ENCODE measurements at regions of chr3 and their contacts with region 1.

Region 1: DNA sequence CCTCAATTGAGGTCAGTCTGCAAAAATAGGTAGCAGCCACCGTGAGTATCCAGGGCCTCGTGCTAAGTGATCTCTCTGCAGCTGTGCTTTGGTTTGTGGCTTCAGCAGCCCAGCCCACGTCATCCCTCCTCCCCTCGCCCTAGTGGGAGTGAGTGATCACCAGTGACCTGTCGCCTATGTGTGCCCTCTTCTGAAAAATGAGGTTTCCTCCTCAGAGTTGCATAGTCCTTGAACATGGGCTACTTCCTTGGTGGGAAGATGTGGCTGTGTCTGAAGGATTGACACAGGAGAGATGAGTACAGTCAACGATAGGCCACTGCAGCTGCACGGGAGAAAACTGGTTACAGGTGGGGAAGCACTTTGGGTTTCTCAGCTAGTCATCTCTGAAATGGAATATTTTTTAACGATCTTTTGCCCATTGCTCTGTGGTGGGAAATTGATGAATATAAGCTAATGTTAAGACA is 144.8 kb upstream of the BHLHE40 start:
- DNase-seq: peak; percentile 80
- H3K4me3 Mint-ChIP-seq: peak overlapping the region; percentile 79
- H3K27ac Mint-ChIP-seq: peak overlapping the region; percentile 98
- H3K4me1 Mint-ChIP-seq: peaks cover 86% of the 10 kb centered on the region
- H3K27me3 Mint-ChIP-seq: no peaks in the 10 kb centered on the region

Region 2: DNA sequence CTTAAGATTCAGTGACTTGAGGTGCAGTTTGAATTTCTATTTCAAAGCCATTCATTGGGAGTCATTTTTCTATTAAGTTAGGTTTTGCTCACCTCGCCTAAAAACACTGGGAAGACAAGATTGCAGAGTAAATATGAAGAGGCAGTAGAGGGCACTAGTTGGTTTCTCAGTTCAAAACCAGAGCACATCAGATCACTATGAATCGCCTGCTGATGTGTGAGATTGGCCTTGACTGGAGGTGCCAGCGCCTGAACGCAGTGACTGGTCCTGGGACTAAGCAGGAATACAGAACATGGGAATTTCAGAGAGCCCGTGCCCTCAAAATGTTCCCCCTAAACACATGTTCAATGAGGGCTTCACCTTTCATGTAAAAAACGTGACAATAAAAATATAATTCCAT is 112.3 kb before region 1 on chr3:
- intact Hi-C with region 1: loop called (anchors 2 kb)
- DNase-seq: no peak
- H3K4me3 Mint-ChIP-seq: no peak overlapping the region
- H3K27ac Mint-ChIP-seq: peak overlapping the region; percentile 90
- H3K4me1 Mint-ChIP-seq: peaks cover 78% of the 10 kb centered on the region
- H3K27me3 Mint-ChIP-seq: no peaks in the 10 kb centered on the region

Region 3: DNA sequence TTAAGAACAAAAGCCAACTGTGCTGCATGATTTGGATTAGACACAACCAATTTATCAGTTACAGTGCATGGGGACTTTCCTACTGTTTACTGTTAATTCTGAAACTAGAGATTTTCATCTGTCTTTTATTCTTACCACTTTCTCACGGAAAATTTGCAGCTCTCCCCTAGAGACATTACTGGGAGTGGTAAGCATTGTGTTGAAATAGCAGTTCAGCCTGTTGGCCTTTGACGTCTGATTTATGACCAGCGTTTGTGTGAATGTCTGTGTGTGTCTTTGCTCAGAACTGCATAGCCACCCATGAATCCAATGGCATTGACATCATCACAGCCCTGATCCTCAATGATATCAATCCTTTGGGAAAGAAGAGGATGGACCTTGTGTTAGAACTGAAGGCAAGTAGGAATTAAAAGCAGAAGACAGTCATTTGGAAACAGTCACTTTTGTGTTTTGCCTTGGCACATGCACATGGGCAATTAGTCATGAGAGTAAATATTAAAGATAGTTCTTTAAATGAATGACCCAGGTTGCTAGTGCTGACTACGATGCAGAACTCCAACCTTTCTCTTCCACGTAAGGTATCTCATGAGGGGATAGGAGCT is 57.4 kb before region 1 on chr3:
- intact Hi-C with region 1: loop called (anchors 1 kb)
- DNase-seq: peak; percentile 32
- H3K4me3 Mint-ChIP-seq: peak overlapping the region; percentile 73
- H3K27ac Mint-ChIP-seq: peak overlapping the region; percentile 98
- H3K4me1 Mint-ChIP-seq: peaks cover 82% of the 10 kb centered on the region
- H3K27me3 Mint-ChIP-seq: no peaks in the 10 kb centered on the region

Region 4: GRCh38 chr3:4845882-4846281 is 11.4 kb after region 1 on chr3:
- intact Hi-C with region 1: loop called (anchors 1 kb)
- DNase-seq: no peak
- H3K4me3 Mint-ChIP-seq: peak overlapping the region; percentile 64
- H3K27ac Mint-ChIP-seq: peak overlapping the region; percentile 95
- H3K4me1 Mint-ChIP-seq: peaks cover 96% of the 10 kb centered on the region
- H3K27me3 Mint-ChIP-seq: no peaks in the 10 kb centered on the region

Region 5: GRCh38 chr3:4906107-4906621 is 71.7 kb after region 1 on chr3:
- intact Hi-C with region 1: loop called (anchors 1 kb)
- DNase-seq: no peak
- H3K4me3 Mint-ChIP-seq: peak overlapping the region; percentile 64
- H3K27ac Mint-ChIP-seq: peak overlapping the region; percentile 94
- H3K4me1 Mint-ChIP-seq: peaks cover 90% of the 10 kb centered on the region
- H3K27me3 Mint-ChIP-seq: no peaks in the 10 kb centered on the region

Region 6: GRCh38 chr3:4935347-4935746 is 100.9 kb after region 1 on chr3:
- intact Hi-C with region 1: no loop called
- DNase-seq: peak; percentile 19
- H3K4me3 Mint-ChIP-seq: peak overlapping the region; percentile 5
- H3K27ac Mint-ChIP-seq: peak overlapping the region; percentile 16
- H3K4me1 Mint-ChIP-seq: peaks cover 53% of the 10 kb centered on the region
- H3K27me3 Mint-ChIP-seq: no peaks in the 10 kb centered on the region

Region 7: DNA sequence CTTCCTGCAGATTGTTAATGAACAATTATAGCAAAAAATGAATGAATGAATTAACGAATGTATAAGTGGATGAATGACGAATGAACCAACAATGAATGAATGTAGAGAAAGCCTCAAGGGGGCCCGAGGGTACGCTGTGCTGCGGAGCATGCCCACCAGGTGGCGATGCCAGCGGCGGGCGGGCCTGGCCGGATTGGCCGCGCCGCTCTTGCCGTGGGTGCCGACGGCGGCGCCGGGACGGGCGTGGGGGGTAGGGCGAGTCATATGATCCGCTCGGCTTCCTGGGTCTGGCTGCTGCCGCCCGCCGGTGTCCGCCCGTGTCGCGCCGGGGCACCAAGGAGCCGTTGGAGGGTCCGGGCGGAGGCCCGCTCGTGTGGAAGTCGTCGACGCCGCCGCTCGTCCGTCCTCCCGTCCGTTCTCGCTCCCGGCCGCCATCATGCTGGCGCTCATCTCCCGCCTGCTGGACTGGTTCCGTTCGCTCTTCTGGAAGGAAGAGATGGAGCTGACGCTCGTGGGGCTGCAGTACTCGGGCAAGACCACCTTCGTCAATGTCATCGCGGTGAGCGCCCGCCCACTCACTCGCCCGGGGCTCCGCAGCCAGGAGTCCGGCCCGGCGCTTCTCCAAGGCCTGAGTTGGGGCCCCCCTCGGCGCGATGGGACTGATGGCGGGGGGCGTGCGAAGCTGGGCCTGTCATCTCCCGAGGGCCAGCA is 287.8 kb after region 1 on chr3 and contains the start of gene ARL8B:
- intact Hi-C with region 1: loop called (anchors 5 kb)
- DNase-seq: peak; percentile 90
- H3K4me3 Mint-ChIP-seq: peak within 1 kb of the TSS; percentile 88
- H3K27ac Mint-ChIP-seq: peak within 1 kb of the TSS; percentile 87
- H3K4me1 Mint-ChIP-seq: peaks cover 40% of the 10 kb centered on the region
- H3K27me3 Mint-ChIP-seq: no peaks in the 10 kb centered on the region
- total RNA-seq, gene ARL8B: 43.4 and 51.0 TPM in 2 replicates

Measured in activated T-helper 1 cell treated with anti-CD3 and anti-CD28 coated beads, Interleukin-12 subunit alpha, Interleukin-12 subunit beta, Interleukin-2, Interleukin-4 antibody, amounts not matched to agents 30 ng/mL and 10 ng/mL and 1 ng/mL, durations not matched to agents 14 hours and 24 hours and 36 hours (primary cell).